Activated B cell treated with CpG ODN at 0.5 μM for 24 hours (primary cell): ENCODE measurements at regions of chr12 and their contacts with region 1.

Region 1: GRCh38 chr12:49069507-49070346 is at the start of gene RHEBL1:
- DNase-seq: peak; percentile 98
- ATAC-seq: peak; percentile 100
- H3K4me3 Mint-ChIP-seq: peak within 1 kb of the TSS; percentile 99
- H3K27ac Mint-ChIP-seq: peak within 1 kb of the TSS; percentile 93
- H3K4me1 Mint-ChIP-seq: peaks cover 15% of the 10 kb centered on the region
- H3K27me3 Mint-ChIP-seq: no peaks in the 10 kb centered on the region
- CTCF ChIP-seq: no peak
- total RNA-seq, gene RHEBL1: 3.2 and 3.3 TPM in 2 replicates

Region 2: DNA sequence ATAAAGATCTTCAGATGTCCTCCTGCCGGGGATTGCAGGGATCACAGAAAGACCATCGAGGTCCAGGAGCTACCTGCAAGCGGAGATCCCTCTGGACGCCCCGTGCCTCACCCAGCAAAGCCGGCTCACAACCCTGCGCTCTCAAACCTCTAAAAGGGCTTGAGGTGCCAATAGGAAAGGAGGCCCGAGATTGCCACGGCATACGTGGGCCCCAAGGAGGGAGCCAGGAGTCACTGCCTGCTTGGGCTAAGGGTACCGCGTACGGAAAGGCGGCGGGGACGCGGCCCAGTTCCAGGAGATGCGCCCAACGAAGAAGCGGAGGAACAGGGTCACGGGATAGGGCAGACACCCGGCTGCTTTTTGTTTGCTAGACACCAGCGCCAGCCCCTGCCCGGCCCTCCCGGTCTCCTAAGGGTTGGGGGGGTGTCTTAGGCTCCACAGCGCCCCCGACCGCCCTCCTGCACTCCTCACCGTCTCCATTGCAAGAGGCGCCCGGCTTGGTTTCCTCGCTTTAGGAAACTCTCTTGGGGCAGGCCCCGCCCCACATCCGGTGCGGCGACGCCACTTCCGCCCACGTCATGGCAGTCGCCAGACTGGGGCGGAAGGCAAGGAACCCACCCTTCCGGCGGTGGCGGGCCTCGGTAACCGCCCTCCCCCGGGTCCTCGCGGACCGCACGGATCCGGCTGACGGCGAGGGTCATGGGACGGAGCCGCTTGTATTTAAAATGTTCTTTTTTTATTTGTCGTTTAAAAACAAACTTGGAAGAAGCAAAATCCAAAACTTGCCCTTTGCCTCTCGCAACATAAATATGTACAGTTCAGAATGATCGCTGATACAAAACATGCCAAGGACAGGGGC is 51.2 kb before region 1 on chr12 and contains the start of gene PRKAG1:
- CTCF ChIA-PET with region 1: no interaction called
- POLR2A ChIA-PET with region 1: interaction called, 9 read pairs
- intact Hi-C with region 1: loop called (anchors 2 kb)
- DNase-seq: peak; percentile 97
- ATAC-seq: peak; percentile 86
- H3K4me3 Mint-ChIP-seq: peak within 1 kb of the TSS; percentile 93
- H3K27ac Mint-ChIP-seq: peak within 1 kb of the TSS; percentile 98
- H3K4me1 Mint-ChIP-seq: peaks cover 31% of the 10 kb centered on the region
- H3K27me3 Mint-ChIP-seq: no peaks in the 10 kb centered on the region
- CTCF ChIP-seq: no peak
- total RNA-seq, gene PRKAG1: 55.3 and 70.5 TPM in 2 replicates

Region 3: DNA sequence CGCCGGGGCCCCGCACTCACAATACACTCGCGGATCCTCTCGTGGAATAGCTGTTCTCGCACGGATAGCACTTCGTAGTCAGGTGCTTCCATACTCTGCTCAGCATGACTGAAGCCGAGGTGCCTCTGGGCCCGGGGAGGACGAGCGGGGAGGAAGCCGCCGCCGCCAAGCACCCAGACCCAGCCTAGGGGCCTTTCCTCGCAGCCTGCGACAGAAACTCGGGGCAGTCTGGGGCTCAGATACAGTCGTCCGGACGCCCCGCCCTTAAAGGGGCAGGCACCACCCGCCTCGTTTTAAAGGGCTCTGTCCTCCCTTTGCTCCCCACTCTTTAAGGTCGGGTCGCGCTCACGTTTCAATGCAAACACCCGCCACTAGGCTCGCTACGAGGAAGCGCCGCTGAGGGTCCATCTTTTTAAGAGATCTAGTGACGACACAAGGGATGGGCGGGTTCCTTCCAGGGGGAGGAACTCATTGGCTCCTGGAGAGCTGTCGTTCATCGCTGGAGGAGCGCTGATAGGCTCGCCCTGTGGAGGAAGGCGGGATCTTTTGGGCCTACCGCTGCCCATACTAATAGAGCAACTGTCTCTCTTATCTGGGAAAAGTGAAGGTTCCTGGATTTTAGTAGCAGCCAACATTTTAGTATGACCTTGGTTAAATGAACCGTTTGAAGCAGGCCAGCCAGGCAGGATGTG is 40.9 kb after region 1 on chr12 and contains the start of gene LMBR1L:
- CTCF ChIA-PET with region 1: interaction called, 9 read pairs
- POLR2A ChIA-PET with region 1: interaction called, 8 read pairs
- intact Hi-C with region 1: loop called (anchors 1 kb)
- DNase-seq: peak; percentile 83
- ATAC-seq: peak; percentile 94
- H3K4me3 Mint-ChIP-seq: peak within 1 kb of the TSS; percentile 98
- H3K27ac Mint-ChIP-seq: peak within 1 kb of the TSS; percentile 96
- H3K4me1 Mint-ChIP-seq: peaks cover 46% of the 10 kb centered on the region
- H3K27me3 Mint-ChIP-seq: no peaks in the 10 kb centered on the region
- CTCF ChIP-seq: no peak
- total RNA-seq, gene LMBR1L: 64.2 and 79.9 TPM in 2 replicates

Region 4: GRCh38 chr12:49232940-49233841 is 163.5 kb after region 1 on chr12:
- CTCF ChIA-PET with region 1: interaction called, 4 read pairs
- POLR2A ChIA-PET with region 1: interaction called, 7 read pairs
- intact Hi-C with region 1: loop called (anchors 1 kb)
- DNase-seq: no peak
- ATAC-seq: no peak
- H3K4me3 Mint-ChIP-seq: peak overlapping the region; percentile 93
- H3K27ac Mint-ChIP-seq: peak overlapping the region; percentile 89
- H3K4me1 Mint-ChIP-seq: peaks cover 15% of the 10 kb centered on the region
- H3K27me3 Mint-ChIP-seq: no peaks in the 10 kb centered on the region
- CTCF ChIP-seq: no peak